Activated naive CD4-positive, alpha-beta T cell treated with anti-CD3 and anti-CD28 coated beads for 36 hours (primary cell): ENCODE measurements at regions of chr7 and their contacts with region 1.

Region 1: GRCh38 chr7:30062591-30062990 is 34.4 kb downstream of the PLEKHA8 start:
- DNase-seq: no peak
- H3K4me3 Mint-ChIP-seq: no peak overlapping the region
- H3K27ac Mint-ChIP-seq: no peak overlapping the region
- H3K4me1 Mint-ChIP-seq: peaks cover 5% of the 10 kb centered on the region
- H3K27me3 Mint-ChIP-seq: no peaks in the 10 kb centered on the region

Region 2: GRCh38 chr7:29639881-29640595 is 422.6 kb before region 1 on chr7:
- CTCF ChIA-PET with region 1: no interaction called
- intact Hi-C with region 1: loop called (anchors 1 kb)
- DNase-seq: no peak
- H3K4me3 Mint-ChIP-seq: no peak overlapping the region
- H3K27ac Mint-ChIP-seq: no peak overlapping the region
- H3K4me1 Mint-ChIP-seq: no peaks in the 10 kb centered on the region
- H3K27me3 Mint-ChIP-seq: no peaks in the 10 kb centered on the region

Region 3: GRCh38 chr7:29748286-29749108 is 314.1 kb before region 1 on chr7:
- CTCF ChIA-PET with region 1: interaction called, 6 read pairs
- intact Hi-C with region 1: loop called (anchors 1 kb)
- DNase-seq: no peak
- H3K4me3 Mint-ChIP-seq: no peak overlapping the region
- H3K27ac Mint-ChIP-seq: no peak overlapping the region
- H3K4me1 Mint-ChIP-seq: no peaks in the 10 kb centered on the region
- H3K27me3 Mint-ChIP-seq: no peaks in the 10 kb centered on the region

Region 4: GRCh38 chr7:29878081-29878688 is 184.4 kb before region 1 on chr7:
- CTCF ChIA-PET with region 1: interaction called, 7 read pairs
- intact Hi-C with region 1: loop called (anchors 1 kb)
- DNase-seq: peak; percentile 47
- H3K4me3 Mint-ChIP-seq: no peak overlapping the region
- H3K27ac Mint-ChIP-seq: no peak overlapping the region
- H3K4me1 Mint-ChIP-seq: peaks cover 6% of the 10 kb centered on the region
- H3K27me3 Mint-ChIP-seq: peaks cover 9% of the 10 kb centered on the region

Region 5: DNA sequence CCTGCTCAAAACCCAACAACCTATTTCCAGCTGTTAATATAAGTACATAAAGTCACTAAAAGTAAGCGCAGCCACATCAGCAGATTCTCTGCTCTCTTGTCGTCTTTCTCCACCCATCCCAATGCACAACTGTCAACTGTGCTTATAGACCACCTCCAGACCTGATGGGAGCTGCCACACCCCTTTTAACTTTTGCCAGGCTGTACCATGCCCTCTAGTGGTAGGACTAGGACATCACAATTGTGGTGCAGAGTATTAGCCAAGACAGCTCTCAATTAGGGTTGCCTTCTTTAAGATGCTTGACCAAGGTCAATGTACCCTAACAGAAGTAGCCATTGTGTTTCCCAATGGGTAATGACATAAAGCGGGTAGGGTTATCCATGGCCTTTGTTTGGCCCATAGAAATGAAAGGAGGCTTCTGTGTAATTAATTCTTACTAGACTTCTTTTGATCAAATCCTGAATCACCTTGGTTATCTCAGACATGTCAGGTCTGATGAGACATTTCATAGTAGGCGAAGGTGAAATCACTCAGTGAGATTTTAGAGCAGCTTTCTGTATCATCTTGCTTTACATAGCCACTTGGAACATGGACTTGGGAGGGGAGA is 141.1 kb before region 1 on chr7:
- CTCF ChIA-PET with region 1: interaction called, 13 read pairs
- intact Hi-C with region 1: loop called (anchors 1 kb)
- DNase-seq: peak; percentile 61
- H3K4me3 Mint-ChIP-seq: no peak overlapping the region
- H3K27ac Mint-ChIP-seq: no peak overlapping the region
- H3K4me1 Mint-ChIP-seq: no peaks in the 10 kb centered on the region
- H3K27me3 Mint-ChIP-seq: no peaks in the 10 kb centered on the region

Region 6: GRCh38 chr7:30074422-30075030 is 11.9 kb after region 1 on chr7:
- CTCF ChIA-PET with region 1: interaction called, 16 read pairs
- intact Hi-C with region 1: no loop called
- DNase-seq: no peak
- H3K4me3 Mint-ChIP-seq: no peak overlapping the region
- H3K27ac Mint-ChIP-seq: no peak overlapping the region
- H3K4me1 Mint-ChIP-seq: no peaks in the 10 kb centered on the region
- H3K27me3 Mint-ChIP-seq: no peaks in the 10 kb centered on the region